CD8-positive, alpha-beta T cell (primary cell): ENCODE measurements at regions of chr16 and their contacts with region 1.

Region 1: DNA sequence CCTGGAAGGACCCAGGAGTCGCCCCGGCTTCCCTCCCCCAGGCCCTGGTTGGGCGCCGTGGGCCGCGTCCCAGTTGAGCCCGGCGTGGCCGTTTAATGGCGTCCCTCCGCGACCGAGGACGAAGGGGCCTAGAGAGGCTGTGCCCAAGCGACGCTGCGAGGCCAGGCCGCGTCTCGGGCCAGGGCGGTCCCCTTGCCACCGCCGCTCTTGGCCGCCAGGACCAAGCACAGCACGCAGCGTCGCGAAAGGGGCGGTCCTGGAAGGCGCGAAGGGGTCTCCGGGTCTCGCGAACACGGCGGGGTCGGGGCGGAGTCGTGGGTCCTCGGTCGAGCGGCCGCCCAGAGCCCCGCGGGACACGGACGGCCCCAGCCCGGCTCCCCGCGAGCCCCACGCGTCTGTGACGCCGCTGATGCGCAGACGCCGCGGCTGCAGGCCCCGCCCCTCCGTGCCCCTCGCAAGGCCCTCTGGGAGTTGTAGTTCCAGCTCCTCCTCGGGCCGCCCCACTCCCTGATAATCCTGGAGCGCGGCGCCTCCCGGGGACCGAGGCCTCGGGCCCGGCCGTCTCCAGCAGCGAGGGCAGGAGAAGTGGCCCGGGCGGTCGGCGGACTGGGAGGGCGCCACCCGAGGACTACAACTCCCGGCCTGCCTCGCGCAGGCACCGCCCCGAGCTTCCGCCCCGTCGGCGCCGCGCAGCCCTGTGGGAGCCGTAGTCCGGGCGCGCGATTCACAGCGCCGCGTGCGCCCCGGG is at the start of gene CAPN15:
- DNase-seq: peak; percentile 71 to 93 (median 81)
- ATAC-seq: peak; percentile 81
- H3K4me3 ChIP-seq: peak within 1 kb of the TSS; percentile 80 to 91
- H3K4me3 Mint-ChIP-seq: peak within 1 kb of the TSS; percentile 86
- H3K27ac ChIP-seq: peak within 1 kb of the TSS; percentile 73 to 92
- H3K27ac Mint-ChIP-seq: peak within 1 kb of the TSS; percentile 88
- H3K4me1 ChIP-seq: peaks cover 35% of the 10 kb centered on the region
- H3K4me1 Mint-ChIP-seq: peaks cover 31% of the 10 kb centered on the region
- H3K27me3 ChIP-seq: no peaks in the 10 kb centered on the region
- H3K27me3 Mint-ChIP-seq: no peaks in the 10 kb centered on the region
- CTCF ChIP-seq: no peak
- total RNA-seq, gene CAPN15: 40.5 to 43.6 TPM

Region 2: DNA sequence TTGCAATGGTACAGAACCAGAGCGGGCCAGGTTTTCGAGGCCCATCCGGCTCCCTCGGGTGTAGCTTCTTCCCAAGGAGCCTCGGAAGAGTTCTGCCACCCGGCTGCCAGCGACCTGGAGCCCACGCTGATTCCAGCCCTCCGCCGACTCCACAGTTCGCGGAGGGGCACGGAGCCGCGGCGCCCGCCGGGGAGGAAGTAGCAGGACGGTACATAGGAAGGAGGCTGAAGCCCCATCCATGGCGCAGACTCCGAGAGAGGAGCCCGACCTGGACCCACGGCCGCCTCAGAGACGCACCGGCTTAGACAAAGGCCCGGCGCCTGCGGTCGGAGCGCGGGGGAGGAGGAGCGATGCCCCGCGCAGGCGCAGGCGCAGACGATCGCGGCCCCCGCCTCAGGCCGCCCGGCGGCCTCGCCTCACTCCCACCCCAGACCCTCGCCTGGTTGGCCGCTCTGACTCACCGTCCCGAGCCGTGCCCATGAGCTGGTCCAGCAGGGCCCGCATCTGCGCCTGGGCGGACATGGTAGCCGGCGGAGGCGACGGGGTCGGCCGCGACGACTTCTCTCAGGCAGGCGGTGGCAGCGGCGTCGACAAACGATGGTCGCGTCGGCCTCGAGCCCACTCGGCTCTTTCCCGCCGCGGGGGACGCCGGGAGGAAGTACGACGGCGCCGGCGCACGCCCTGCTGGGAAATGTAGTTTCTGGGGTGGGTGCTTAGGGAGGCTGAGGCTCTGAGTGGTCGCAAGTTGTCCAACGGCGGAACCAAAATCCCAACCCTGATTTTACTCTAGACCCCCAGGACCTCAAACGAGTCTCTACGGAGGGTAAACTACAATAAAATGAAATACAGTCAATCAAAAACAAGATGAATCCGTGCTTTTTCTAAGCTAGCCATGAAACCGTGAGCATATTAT is 298.1 kb before region 1 on chr16 and contains the start of gene LUC7L:
- CTCF ChIA-PET with region 1: no interaction called
- POLR2A ChIA-PET with region 1: no interaction called
- intact Hi-C with region 1: loop called in 1 of 2 experiments (anchors 10 kb)
- DNase-seq: peak; percentile 74 to 93 (median 85)
- ATAC-seq: peak; percentile 89
- H3K4me3 ChIP-seq: peak within 1 kb of the TSS; percentile 68 to 78
- H3K4me3 Mint-ChIP-seq: peak within 1 kb of the TSS; percentile 87
- H3K27ac ChIP-seq: peak within 1 kb of the TSS; percentile 84 to 92
- H3K27ac Mint-ChIP-seq: peak within 1 kb of the TSS; percentile 97
- H3K4me1 ChIP-seq: peaks cover 37% of the 10 kb centered on the region
- H3K4me1 Mint-ChIP-seq: peaks cover 36% of the 10 kb centered on the region
- H3K27me3 ChIP-seq: no peaks in the 10 kb centered on the region
- H3K27me3 Mint-ChIP-seq: no peaks in the 10 kb centered on the region
- CTCF ChIP-seq: no peak
- total RNA-seq, gene LUC7L: 136 to 142 TPM

Region 3: DNA sequence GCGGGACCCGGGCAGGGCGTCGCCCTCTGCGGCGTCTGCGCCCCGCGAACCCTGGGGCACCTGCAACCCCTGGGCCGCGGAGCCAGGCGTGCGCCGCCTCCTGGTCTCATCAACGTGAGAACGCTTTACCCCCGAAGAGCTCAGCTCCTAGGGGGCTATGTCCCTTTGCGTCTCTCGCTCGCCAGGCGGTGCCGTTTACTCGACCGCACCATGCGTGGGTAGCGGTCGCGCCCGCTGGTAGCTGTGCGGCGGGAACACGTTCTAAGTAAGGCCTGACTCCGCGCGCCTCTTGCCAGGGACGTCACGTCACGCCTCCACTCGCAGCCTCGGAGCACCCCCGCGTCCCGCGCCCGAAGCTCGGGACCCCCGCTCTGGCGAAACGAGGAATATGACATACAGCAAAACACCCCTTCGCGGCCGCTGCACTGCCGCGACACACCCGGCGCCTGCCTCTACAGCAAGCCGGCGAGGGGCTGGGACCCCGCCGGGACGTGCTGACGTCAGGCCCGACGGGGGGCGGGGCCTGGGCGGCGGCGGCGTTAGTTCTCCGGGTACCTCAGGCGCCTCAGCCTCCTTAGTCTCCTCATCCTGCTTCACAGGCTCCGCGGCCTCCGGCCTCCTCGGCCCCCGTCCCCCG is 102.0 kb before region 1 on chr16 and contains the start of gene RAB11FIP3:
- CTCF ChIA-PET with region 1: no interaction called
- POLR2A ChIA-PET with region 1: no interaction called
- intact Hi-C with region 1: loop called (anchors 1 kb)
- DNase-seq: peak; percentile 66 to 92 (median 83)
- ATAC-seq: peak; percentile 89
- H3K4me3 ChIP-seq: peak within 1 kb of the TSS; percentile 78 to 86
- H3K4me3 Mint-ChIP-seq: peak within 1 kb of the TSS; percentile 90
- H3K27ac ChIP-seq: peak within 1 kb of the TSS; percentile 81 to 93
- H3K27ac Mint-ChIP-seq: peak within 1 kb of the TSS; percentile 96
- H3K4me1 ChIP-seq: peaks cover 21% of the 10 kb centered on the region
- H3K4me1 Mint-ChIP-seq: peaks cover 36% of the 10 kb centered on the region
- H3K27me3 ChIP-seq: peaks cover 0 to 3% of the 10 kb centered on the region in 2 experiments
- H3K27me3 Mint-ChIP-seq: peaks cover 3% of the 10 kb centered on the region
- CTCF ChIP-seq: peak; percentile 40
- total RNA-seq, gene RAB11FIP3: 26.4 to 27.5 TPM

Region 4: DNA sequence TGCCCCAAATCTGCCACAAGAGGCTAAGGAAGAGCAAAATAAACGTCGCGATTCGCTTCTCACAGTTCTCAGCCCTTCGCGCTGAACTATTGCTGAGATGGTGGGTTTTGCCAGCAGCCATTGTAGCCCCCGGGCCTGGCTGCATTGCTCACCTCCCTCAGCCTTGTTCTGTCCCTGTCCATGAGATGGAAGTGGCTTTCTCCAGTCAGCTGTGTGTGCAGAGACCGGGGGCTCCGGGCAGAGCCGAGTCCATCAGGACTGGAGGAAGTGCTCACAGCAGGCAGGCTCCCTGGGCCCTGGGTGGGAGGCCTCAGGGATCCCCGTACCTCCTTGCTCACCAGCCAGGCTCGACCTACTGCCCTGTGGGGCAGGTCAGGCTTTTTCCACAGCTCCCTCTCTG is 27.3 kb before region 1 on chr16:
- CTCF ChIA-PET with region 1: no interaction called
- POLR2A ChIA-PET with region 1: no interaction called
- intact Hi-C with region 1: no loop called
- DNase-seq: no peak
- ATAC-seq: no peak
- H3K4me3 ChIP-seq: no peak overlapping the region
- H3K4me3 Mint-ChIP-seq: no peak overlapping the region
- H3K27ac ChIP-seq: no peak overlapping the region
- H3K27ac Mint-ChIP-seq: no peak overlapping the region
- H3K4me1 ChIP-seq: no peaks in the 10 kb centered on the region
- H3K4me1 Mint-ChIP-seq: no peaks in the 10 kb centered on the region
- H3K27me3 ChIP-seq: no peaks in the 10 kb centered on the region
- H3K27me3 Mint-ChIP-seq: no peaks in the 10 kb centered on the region
- CTCF ChIP-seq: no peak

Region 5: GRCh38 chr16:554640-555365 is 27.6 kb after region 1 on chr16:
- CTCF ChIA-PET with region 1: no interaction called
- POLR2A ChIA-PET with region 1: no interaction called
- intact Hi-C with region 1: no loop called
- DNase-seq: peak in 1 of 9 experiments; percentile 36
- ATAC-seq: no peak
- H3K4me3 ChIP-seq: no peak overlapping the region
- H3K4me3 Mint-ChIP-seq: no peak overlapping the region
- H3K27ac ChIP-seq: no peak overlapping the region
- H3K27ac Mint-ChIP-seq: no peak overlapping the region
- H3K4me1 ChIP-seq: no peaks in the 10 kb centered on the region
- H3K4me1 Mint-ChIP-seq: no peaks in the 10 kb centered on the region
- H3K27me3 ChIP-seq: peaks cover 0 to 13% of the 10 kb centered on the region in 2 experiments
- H3K27me3 Mint-ChIP-seq: peaks cover 4% of the 10 kb centered on the region
- CTCF ChIP-seq: no peak

Region 6: DNA sequence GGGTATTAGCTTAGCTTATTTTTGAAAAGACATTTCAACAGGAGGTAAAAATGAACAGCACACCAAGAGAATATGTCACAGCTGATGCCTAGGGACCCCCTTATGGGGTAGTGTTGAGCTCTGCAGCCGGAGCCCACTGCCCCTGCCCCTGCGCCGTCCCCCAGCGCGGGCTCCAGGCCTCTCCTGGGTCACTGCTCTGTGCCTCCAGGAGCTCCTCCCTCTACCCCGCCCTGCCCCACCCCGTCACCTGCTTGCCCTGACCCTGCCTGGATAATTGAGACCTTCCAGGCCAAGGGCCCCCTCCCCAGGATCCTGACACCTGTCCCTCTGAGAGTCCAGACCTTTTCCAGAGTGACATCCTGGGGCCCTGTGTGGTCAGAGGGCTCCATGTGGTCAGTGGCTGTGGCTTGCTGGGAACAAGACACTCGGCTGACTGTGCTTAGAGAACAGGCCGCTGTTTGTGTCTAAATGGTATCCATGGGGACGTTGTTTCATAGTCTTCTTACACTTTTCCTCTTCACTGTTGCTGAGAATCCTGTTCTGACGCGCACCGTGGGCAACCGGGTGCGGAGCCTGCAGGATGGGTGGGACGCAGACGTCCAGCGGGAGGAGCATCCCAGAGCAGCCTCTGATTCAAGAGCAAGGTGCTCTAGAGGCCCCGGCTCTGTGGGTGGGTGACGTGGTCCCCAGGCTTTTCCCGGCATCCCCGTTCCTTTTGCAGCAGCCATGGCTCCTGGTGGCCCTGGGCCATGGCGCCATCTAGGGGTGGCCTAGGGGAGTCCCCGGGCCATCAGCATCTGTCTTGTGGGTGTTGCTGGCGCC is 83.5 kb after region 1 on chr16:
- CTCF ChIA-PET with region 1: no interaction called
- POLR2A ChIA-PET with region 1: no interaction called
- intact Hi-C with region 1: loop called in 1 of 2 experiments (anchors 2 kb)
- DNase-seq: peak in 8 of 9 experiments; percentile 32 to 73 (median 65)
- ATAC-seq: peak; percentile 84
- H3K4me3 ChIP-seq: no peak overlapping the region
- H3K4me3 Mint-ChIP-seq: no peak overlapping the region
- H3K27ac ChIP-seq: no peak overlapping the region
- H3K27ac Mint-ChIP-seq: no peak overlapping the region
- H3K4me1 ChIP-seq: no peaks in the 10 kb centered on the region
- H3K4me1 Mint-ChIP-seq: peaks cover 6% of the 10 kb centered on the region
- H3K27me3 ChIP-seq: no peaks in the 10 kb centered on the region
- H3K27me3 Mint-ChIP-seq: no peaks in the 10 kb centered on the region
- CTCF ChIP-seq: peak; percentile 68

Region 7: DNA sequence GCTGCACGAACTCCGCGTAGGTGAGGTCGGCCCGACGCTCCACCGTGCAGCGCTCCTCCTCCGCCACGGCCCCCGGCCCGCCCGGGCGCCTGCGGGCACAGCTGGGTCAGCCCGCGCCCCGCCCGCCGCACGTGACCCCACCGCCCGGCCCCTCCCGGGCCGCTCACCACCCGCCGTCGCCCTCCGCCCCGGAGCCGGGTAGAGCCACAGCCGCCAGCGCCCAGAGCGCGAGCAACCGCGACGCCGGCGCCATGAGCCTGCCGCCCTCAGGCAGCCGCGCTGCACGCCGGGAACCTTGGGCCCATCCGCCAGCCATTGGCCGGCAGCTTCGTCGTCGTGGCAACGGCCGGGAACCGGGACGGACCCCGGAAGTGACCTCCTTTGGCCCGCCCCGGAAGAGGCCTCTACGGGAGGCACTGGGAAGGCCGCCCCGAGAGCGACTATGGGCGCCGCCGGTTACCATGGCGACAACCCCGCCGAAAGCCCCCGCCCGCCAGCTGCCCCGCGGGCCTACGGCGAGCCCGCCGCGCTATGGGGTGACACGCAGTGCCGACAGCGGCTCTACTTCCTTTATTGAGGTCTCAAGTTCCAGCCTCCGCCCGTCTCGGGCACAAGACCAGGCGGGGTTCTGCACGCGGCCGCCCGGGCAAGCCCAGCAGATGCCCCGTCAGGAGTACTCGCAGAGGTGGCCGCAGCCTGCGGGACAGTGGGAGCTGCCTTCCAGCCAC is 157.1 kb after region 1 on chr16 and contains the start of gene JMJD8:
- CTCF ChIA-PET with region 1: no interaction called
- POLR2A ChIA-PET with region 1: no interaction called
- intact Hi-C with region 1: loop called in 1 of 2 experiments (anchors 5 kb)
- DNase-seq: peak; percentile 88 to 98 (median 97)
- ATAC-seq: peak; percentile 43
- H3K4me3 ChIP-seq: peak within 1 kb of the TSS; percentile 60 to 66
- H3K4me3 Mint-ChIP-seq: peak within 1 kb of the TSS; percentile 78
- H3K27ac ChIP-seq: peak within 1 kb of the TSS; percentile 69 to 80
- H3K27ac Mint-ChIP-seq: peak within 1 kb of the TSS; percentile 72
- H3K4me1 ChIP-seq: peaks cover 39% of the 10 kb centered on the region
- H3K4me1 Mint-ChIP-seq: peaks cover 35% of the 10 kb centered on the region
- H3K27me3 ChIP-seq: no peaks in the 10 kb centered on the region
- H3K27me3 Mint-ChIP-seq: no peaks in the 10 kb centered on the region
- CTCF ChIP-seq: no peak
- total RNA-seq, gene JMJD8: 15.8 to 18.7 TPM

Region 8: GRCh38 chr16:807347-808084 is 280.3 kb after region 1 on chr16:
- CTCF ChIA-PET with region 1: no interaction called
- POLR2A ChIA-PET with region 1: no interaction called
- intact Hi-C with region 1: loop called in 1 of 2 experiments (anchors 5 kb)
- DNase-seq: peak; percentile 65 to 93 (median 81)
- ATAC-seq: peak; percentile 88
- H3K4me3 ChIP-seq: peak overlapping the region; percentile 53 to 88
- H3K4me3 Mint-ChIP-seq: peak overlapping the region; percentile 94
- H3K27ac ChIP-seq: peak overlapping the region; percentile 61 to 85
- H3K27ac Mint-ChIP-seq: peak overlapping the region; percentile 92
- H3K4me1 ChIP-seq: peaks cover 7% of the 10 kb centered on the region
- H3K4me1 Mint-ChIP-seq: peaks cover 15% of the 10 kb centered on the region
- H3K27me3 ChIP-seq: peaks cover 0 to under 1% of the 10 kb centered on the region in 2 experiments
- H3K27me3 Mint-ChIP-seq: peaks cover 5% of the 10 kb centered on the region
- CTCF ChIP-seq: no peak